IMR-90 (cell line): ENCODE measurements at regions of chr5 and their contacts with region 1.

Region 1: DNA sequence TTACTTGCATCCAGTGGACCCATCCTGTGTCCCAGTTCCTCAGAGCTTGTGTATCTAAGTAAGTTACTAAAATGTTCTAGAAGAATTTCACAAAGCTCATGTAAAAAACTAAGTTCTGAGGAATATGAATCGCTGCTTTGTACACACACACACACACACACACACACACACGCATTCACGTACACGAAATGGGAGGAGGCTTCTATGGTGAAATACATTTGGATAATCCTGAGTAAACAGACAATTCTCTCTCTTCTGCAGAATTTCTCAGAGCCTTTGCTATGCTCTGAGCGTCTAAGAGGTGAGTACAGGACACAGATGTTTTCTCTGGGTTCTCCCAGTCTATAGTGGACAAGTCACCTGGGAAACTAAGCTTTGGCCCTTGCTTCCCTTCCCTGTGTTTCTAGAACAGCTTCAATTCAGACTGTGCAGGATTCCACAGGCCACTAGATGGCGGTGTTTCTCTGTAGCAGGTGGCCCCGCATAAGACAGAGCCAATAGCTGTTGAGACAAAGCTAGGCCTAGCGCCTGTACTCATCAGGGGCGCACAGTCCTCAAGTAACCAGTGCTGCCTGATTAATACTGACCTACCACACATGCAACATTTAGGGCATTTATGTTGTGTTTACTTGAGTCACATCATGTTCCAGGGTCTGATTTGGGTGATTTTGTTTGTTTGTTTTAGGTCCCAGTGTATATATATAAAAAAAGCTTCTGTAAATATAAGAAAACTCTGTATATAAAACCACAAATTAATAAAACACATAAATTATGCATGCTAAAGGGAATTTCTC is 114.8 kb downstream of the LIFR start:
- DNase-seq: peak; percentile 91
- ATAC-seq: peak; percentile 100
- H3K4me3 ChIP-seq: no peak overlapping the region
- H3K27ac ChIP-seq: no peak overlapping the region
- H3K4me1 ChIP-seq: peaks cover 4% of the 10 kb centered on the region
- H3K27me3 ChIP-seq: peaks cover 10% of the 10 kb centered on the region
- CTCF ChIP-seq: peak; percentile 99
- POLR2A ChIP-seq: peak; percentile 58
- RAD21 ChIP-seq: peak; percentile 100

Region 2: DNA sequence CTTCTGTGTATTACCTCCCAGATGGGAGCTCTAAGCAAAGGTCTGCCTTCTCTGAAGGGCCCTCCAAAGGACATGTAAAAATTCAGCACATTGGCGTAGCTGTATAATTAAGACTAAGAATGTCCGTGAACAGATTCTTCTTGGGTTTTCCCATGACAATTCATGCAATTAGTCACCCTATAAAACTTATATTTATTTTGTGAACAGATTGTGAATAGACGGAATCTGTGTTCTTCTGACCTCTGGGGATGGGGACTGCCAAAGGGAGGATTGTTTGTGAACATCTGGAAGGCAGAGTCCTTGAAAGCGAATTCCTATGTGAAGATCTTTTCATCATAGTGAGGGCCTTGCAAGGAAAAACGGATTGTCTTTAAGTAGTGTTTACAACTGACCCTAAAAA is 72.0 kb before region 1 on chr5:
- CTCF ChIA-PET with region 1: no interaction called
- POLR2A ChIA-PET with region 1: no interaction called
- dilution Hi-C with region 1: no loop called
- in situ Hi-C with region 1: no loop called
- intact Hi-C with region 1: no loop called
- DNase-seq: no peak
- ATAC-seq: no peak
- H3K4me3 ChIP-seq: no peak overlapping the region
- H3K27ac ChIP-seq: no peak overlapping the region
- H3K4me1 ChIP-seq: no peaks in the 10 kb centered on the region; the same call in 1 of the 2 replicates
- H3K27me3 ChIP-seq: peaks cover 20% of the 10 kb centered on the region
- CTCF ChIP-seq: no peak
- POLR2A ChIP-seq: no peak
- RAD21 ChIP-seq: no peak

Region 3: DNA sequence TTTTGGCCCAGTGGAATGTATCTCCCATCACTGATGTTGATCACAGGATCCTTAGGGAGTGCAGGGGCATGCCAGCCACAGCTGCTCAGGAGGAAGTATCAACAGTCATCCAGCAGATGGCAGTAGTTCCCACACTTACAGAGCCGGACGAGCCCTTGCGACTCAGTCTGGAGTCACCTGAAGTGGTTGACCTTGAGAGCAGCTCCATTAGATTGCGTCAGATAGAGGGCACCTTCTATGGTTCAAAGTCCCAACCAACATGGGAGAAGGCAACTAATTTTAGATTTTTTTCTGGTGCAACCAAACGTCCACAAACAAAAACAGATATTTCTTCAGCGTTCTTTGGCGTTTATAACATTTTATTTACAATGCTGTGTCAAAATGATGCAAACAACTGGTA is 58.8 kb before region 1 on chr5:
- CTCF ChIA-PET with region 1: interaction called, 12 read pairs
- POLR2A ChIA-PET with region 1: no interaction called
- dilution Hi-C with region 1: no loop called
- in situ Hi-C with region 1: no loop called
- intact Hi-C with region 1: no loop called
- DNase-seq: peak; percentile 68
- ATAC-seq: peak; percentile 99
- H3K4me3 ChIP-seq: no peak overlapping the region
- H3K27ac ChIP-seq: no peak overlapping the region
- H3K4me1 ChIP-seq: no peaks in the 10 kb centered on the region; the same call in 1 of the 2 replicates
- H3K27me3 ChIP-seq: peaks cover 24% of the 10 kb centered on the region
- CTCF ChIP-seq: peak; percentile 70
- POLR2A ChIP-seq: no peak
- RAD21 ChIP-seq: peak; percentile 71

Region 4: GRCh38 chr5:38452201-38452600 is 10.6 kb after region 1 on chr5:
- CTCF ChIA-PET with region 1: interaction called, 10 read pairs
- POLR2A ChIA-PET with region 1: no interaction called
- dilution Hi-C with region 1: no loop called
- in situ Hi-C with region 1: no loop called
- intact Hi-C with region 1: no loop called
- DNase-seq: no peak
- ATAC-seq: no peak
- H3K4me3 ChIP-seq: no peak overlapping the region
- H3K27ac ChIP-seq: no peak overlapping the region
- H3K4me1 ChIP-seq: no peaks in the 10 kb centered on the region
- H3K27me3 ChIP-seq: 0 out of 2 replicates have a peak, but pooled peaks cover 9% of the 10 kb centered on the region
- CTCF ChIP-seq: no peak
- POLR2A ChIP-seq: no peak
- RAD21 ChIP-seq: no peak

Region 5: DNA sequence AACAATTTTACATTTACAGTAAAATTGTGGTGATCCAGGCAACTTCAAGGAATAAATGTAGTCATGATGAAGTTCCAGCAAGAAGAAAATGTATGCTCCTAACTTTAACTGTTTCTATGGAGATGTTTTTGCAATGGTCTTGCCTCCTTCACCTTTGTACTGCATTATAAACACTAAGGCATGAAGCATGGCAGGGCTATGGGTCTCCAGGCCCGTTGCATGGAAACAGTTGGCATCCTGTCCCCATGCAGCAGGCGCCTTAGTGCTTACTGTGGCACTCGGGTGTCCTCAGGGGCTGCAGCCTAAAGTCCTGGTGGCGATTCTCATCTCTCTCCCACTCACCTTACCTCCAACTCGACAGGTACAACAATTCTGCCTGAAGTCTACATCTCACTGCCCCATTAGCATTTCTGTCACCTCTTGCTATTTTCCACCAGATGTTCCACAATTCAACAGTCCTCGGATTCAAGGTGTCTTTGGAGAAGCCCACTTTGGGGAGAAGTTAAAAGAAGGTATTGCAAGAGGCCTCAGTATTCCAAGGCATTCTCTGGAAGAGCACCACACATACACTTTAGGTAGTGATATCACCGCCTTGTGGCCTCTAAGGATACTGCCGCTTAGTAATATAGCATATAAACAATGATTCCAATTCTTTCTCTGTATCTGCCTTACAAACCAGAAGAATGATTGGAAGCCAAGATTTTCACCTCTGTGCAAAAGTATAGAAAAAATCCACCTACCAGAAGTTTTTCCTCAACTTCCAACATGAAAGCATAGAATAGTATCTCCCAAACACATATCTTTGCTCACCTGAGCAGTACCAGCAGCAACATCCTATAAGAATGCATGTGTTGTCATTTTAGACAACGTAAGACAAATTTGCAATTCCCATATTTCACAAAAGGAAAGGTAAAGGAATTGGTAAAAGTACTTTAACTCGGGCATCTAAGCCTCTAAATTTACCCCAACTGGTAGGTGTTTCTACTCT is 109.7 kb after region 1 on chr5:
- CTCF ChIA-PET with region 1: interaction called, 18 read pairs
- POLR2A ChIA-PET with region 1: no interaction called
- dilution Hi-C with region 1: no loop called
- in situ Hi-C with region 1: no loop called
- intact Hi-C with region 1: loop called (anchors 1 kb)
- DNase-seq: peak; percentile 73
- ATAC-seq: 0 out of 2 replicates have a peak, but pooled peaks have one; percentile 25
- H3K4me3 ChIP-seq: no peak overlapping the region
- H3K27ac ChIP-seq: no peak overlapping the region
- H3K4me1 ChIP-seq: peaks cover 13% of the 10 kb centered on the region
- H3K27me3 ChIP-seq: no peaks in the 10 kb centered on the region
- CTCF ChIP-seq: peak; percentile 71
- POLR2A ChIP-seq: no peak
- RAD21 ChIP-seq: peak; percentile 69

Region 6: DNA sequence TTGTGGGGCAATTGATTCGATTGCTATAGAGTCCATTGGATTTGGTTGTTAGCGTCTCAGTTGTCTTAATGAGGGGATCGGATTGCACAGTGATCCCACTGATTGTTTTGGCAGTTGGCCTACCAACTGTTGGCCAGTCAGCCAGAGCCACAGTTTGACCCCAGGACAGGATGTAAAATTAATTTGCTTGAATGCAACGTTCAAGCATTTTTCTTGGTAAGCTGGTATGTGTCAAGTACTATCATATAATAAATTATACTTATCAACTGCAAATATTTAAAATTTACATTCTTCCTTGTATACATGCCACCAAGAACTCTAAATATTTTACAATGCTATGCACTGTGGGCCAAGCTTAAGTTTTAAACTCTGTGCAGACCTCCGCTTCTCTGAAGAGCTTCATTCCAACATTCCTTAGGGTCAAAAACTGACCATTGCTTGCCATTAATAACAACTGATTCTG is 323.8 kb after region 1 on chr5:
- CTCF ChIA-PET with region 1: interaction called, 11 read pairs
- POLR2A ChIA-PET with region 1: no interaction called
- dilution Hi-C with region 1: no loop called
- in situ Hi-C with region 1: no loop called
- intact Hi-C with region 1: no loop called
- DNase-seq: peak; percentile 86
- ATAC-seq: peak; percentile 90
- H3K4me3 ChIP-seq: no peak overlapping the region
- H3K27ac ChIP-seq: peak overlapping the region; percentile 27; the same call in 1 of the 2 replicates
- H3K4me1 ChIP-seq: peaks cover 5% of the 10 kb centered on the region
- H3K27me3 ChIP-seq: peaks cover 25% of the 10 kb centered on the region
- CTCF ChIP-seq: no peak
- POLR2A ChIP-seq: no peak
- RAD21 ChIP-seq: no peak

Region 7: GRCh38 chr5:39437469-39437868 is 995.8 kb after region 1 on chr5:
- CTCF ChIA-PET with region 1: no interaction called
- POLR2A ChIA-PET with region 1: no interaction called
- dilution Hi-C with region 1: no loop called
- in situ Hi-C with region 1: no loop called
- intact Hi-C with region 1: no loop called
- DNase-seq: no peak
- ATAC-seq: no peak
- H3K4me3 ChIP-seq: no peak overlapping the region
- H3K27ac ChIP-seq: no peak overlapping the region
- H3K4me1 ChIP-seq: no peaks in the 10 kb centered on the region
- H3K27me3 ChIP-seq: no peaks in the 10 kb centered on the region
- CTCF ChIP-seq: no peak
- POLR2A ChIP-seq: no peak
- RAD21 ChIP-seq: no peak